Calu3 (cell line): ENCODE measurements at regions of chr17 and their contacts with region 1.

Region 1: DNA sequence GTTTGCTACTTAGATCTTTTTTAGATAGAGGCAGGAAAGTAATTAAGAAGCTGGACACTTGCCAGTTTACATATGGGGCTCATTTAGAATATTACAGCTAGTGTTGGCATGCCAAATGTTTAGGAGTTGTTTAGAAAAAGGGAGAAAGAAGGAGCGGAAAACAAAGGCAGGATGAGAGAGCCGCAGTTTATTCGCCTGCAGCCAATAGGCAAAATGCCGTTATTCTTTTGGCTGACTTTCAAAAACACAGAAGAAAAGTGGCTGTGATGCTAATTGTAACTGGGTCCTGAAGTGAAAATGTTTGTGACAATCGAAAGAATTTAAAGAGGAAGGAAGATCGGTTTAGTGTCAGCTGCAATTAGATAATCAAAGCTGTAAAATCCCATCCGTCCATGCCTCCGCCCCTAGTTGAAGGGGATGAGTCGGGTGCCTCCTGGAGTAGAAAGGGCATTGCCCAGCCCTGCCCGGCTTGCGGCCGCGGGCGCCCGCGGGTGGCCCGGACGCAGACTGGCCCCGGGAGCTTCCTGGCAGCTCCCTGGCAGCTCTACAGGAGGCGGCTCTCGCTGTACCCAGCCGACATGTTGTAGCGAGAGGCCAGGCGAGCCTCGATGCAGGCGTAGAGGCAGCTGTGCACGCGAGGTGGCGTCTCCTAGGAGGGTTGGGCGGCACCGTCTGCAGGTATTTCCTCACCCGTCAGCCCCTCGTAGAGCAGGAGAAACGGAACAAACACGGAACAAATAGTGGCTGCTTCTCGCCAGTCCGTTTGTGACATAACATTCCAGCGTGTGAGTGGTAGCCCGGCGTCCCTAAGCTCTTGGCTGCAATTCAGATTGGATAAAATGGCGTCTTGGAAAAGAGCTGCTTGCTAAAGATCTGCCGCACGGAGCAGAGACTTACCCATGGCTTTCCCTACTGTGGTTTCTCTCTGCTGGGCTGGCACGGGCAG is 82.2 kb downstream of the TNRC6C start:
- DNase-seq: peak; percentile 66
- H3K4me3 Mint-ChIP-seq: peak overlapping the region; percentile 71
- H3K27ac Mint-ChIP-seq: peak overlapping the region; percentile 37
- H3K4me1 Mint-ChIP-seq: no peaks in the 10 kb centered on the region
- H3K27me3 Mint-ChIP-seq: no peaks in the 10 kb centered on the region
- CTCF ChIP-seq: no peak

Region 2: DNA sequence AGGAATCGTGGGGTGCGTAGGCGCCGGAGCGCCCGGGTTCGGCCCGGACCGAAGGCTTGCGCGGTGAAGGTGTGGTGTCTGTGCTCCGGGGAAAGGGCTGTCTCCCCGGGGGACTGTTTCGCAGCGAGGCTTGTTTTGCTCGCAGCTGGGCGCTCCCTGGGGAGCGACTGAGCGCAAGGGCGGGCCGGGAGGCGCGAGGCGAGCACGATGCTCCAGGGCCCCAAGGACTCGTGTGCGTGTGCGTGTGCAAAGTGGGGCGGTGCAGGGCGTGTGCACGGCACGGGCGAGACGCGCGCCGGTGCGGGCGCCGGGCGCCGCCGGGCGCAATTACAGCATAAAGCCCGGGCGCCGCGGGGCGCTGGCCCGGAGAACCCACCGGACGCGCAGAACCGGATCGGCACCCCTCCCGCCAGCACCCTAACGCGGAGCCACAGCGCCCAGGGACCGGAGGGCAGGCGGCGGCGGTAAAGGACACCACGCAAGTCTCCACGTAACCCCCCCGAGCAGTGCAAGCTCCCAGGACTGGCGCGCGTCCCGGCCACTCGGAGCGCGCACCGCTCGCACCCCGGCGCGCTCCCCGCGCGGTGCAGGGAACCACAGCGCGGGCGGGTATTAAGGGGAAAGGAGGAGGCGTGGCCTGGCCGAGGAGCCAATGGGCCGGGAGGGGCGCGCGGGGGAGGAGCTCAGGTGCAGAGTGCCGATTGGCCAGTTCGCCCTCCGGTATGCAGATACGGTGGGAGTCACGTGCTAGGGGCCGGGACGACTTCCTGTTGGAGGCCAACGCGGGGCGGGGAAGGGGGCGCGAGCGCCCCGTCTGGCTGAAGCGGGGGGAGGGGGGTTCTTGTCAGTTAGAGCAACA is 82.6 kb before region 1 on chr17 and contains the start of gene TNRC6C:
- CTCF ChIA-PET with region 1: no interaction called
- intact Hi-C with region 1: no loop called
- DNase-seq: peak; percentile 99
- H3K4me3 Mint-ChIP-seq: peak within 1 kb of the TSS; percentile 90
- H3K27ac Mint-ChIP-seq: peak within 1 kb of the TSS; percentile 92
- H3K4me1 Mint-ChIP-seq: peaks cover 8% of the 10 kb centered on the region
- H3K27me3 Mint-ChIP-seq: peaks cover 68% of the 10 kb centered on the region
- CTCF ChIP-seq: no peak
- total RNA-seq, gene TNRC6C: 11.9 and 18.2 TPM in 2 replicates

Region 3: GRCh38 chr17:78019367-78019975 is 21.2 kb before region 1 on chr17:
- CTCF ChIA-PET with region 1: interaction called, 13 read pairs
- intact Hi-C with region 1: no loop called
- DNase-seq: no peak
- H3K4me3 Mint-ChIP-seq: no peak overlapping the region
- H3K27ac Mint-ChIP-seq: no peak overlapping the region
- H3K4me1 Mint-ChIP-seq: no peaks in the 10 kb centered on the region
- H3K27me3 Mint-ChIP-seq: no peaks in the 10 kb centered on the region
- CTCF ChIP-seq: no peak